Sciatic nerve (tissue), 2 donors: ENCODE measurements at regions of chr4 and their contacts with region 1.

Region 1: DNA sequence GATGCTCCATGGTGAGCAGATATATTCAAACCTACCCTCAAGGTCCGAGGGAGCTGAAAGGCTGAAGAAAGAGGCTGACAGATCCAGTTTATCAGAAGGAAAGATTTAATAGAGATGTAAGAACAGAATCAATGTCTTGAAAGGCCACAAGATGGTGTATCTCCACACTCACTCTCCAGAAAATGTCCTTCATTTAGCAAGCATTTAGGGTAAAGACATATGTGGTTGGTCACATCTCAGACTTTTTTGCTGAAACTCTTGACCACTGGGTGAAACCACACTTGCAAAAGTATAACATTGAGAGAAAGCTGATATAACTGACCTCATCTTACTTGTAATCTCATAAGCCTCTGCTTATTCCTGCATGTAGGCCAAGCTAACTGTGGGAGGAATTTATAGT is 745.8 kb upstream of the GALNTL6 start:
- DNase-seq: no peak
- ATAC-seq: no peak

Region 2: DNA sequence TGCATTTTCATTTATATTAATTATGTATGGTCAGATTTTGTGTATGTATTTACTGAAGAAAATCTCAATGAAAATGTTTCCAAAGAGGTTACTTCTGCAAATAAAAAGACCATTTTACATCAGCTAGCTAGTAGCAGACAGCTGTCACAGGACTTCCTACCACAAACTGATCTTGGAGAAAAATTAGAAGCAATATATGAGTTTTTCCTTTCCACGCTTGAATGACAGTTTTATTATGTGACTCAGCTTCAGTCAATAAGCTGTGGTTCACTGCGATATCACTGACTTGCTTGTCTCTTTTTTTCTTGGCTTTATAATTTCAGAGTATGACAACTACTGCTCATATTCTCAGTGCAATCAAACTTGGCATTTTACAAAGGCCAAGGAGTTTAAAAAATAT is 41.6 kb before region 1 on chr4:
- intact Hi-C with region 1: loop called (anchors 2 kb)
- DNase-seq: no peak
- ATAC-seq: no peak

Region 3: GRCh38 chr4:171203425-171203824 is 136.0 kb after region 1 on chr4:
- intact Hi-C with region 1: no loop called
- DNase-seq: no peak
- ATAC-seq: no peak

Region 4: DNA sequence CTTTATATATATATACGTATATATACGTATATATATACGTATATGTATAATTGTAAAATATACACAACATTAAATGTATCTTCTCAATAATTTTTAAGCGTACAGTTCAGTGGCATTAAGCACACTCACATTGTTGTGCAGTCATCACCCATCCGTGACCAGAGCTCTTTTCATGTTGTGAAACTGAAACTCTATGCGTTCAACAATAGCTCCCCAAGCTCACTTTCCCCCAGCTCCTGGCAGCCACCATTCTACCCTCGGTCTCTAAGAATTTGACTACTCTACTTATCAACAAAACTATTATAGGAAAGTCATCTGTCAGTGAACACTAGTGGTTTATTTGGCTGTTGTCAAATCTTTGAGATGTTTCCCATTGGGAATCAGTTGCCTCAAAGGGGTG is 1479.4 kb after region 1 on chr4:
- intact Hi-C with region 1: loop called (anchors 10 kb)
- DNase-seq: no peak
- ATAC-seq: no peak